Dorsolateral prefrontal cortex (tissue), 120 donors: ENCODE measurements at regions of chr18 and their contacts with region 1.

Region 1: DNA sequence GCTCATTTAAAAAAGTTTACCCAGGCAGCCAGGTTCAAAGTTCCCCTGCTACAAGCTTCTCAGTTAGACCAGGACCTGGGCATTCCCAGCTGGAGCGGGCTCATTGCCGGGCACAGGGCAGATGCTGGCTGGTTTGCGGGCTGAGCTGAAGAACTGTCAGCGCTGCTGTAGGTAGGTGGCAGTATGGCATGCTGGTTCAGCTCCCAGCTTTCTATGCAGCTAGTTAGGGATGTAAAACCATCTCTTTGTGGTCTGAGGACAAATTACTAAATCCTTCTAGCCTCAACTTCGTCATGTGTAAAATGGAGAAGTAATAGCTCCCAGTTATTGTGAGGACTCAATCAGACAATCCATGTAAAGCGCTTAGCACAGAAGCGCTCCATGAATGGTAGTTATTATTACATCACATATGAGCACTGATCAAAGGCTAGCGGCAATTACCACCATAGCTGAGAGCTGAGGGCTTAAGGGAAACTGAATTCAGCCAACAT is 2.4 kb upstream of the LDLRAD4 start:
- DNase-seq: peak; percentile 70 to 91 (median 88)
- H3K4me3 ChIP-seq: peak overlapping the region in 53 of 59 donors; percentile 17 to 95 (median 82)
- H3K27ac ChIP-seq: peak overlapping the region in 43 of 59 donors; percentile 23 to 85 (median 62)
- H3K27me3 ChIP-seq: no peaks in the 10 kb centered on the region
- CTCF ChIP-seq: peak; percentile 58 to 96 (median 87)

Region 2: DNA sequence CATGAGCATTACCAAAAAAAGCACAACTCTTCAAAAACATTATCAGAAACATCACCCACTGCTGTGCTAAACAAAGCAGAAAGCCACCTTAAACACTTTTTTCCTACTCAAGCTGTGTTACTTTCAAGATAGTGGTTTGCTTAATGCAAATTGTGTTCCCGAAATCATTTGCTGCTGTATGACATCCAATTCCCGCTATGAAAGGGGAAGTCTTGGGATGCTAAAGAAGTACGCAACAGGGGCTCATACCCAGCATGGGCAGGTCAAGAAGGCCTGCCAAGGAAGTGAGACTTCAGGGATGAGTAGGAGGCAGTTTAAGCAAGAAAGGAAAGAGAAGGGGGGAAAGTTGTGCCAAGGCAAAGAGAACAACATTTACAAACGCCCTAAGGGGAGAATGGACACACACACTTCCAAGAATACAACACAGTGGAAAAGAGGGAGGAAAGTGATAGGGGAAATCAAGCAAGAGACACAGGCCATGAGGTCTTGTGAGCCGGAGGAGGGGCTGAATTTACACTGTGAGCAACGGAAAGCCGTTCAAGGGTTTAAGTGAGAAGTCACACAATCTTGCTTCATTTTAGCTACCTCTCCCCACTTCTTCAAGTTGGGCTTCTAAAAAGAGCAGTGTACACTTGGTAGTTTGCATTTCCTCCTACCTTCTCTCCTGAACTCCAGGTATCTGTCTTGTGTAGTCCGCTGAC is 336.1 kb before region 1 on chr18:
- intact Hi-C with region 1: no loop called
- DNase-seq: no peak
- H3K4me3 ChIP-seq: no peak overlapping the region
- H3K27ac ChIP-seq: peak overlapping the region in 28 of 59 donors; percentile 2 to 83 (median 30)
- H3K27me3 ChIP-seq: no peaks in the 10 kb centered on the region
- CTCF ChIP-seq: no peak

Region 3: GRCh38 chr18:13371689-13372418 is 155.7 kb after region 1 on chr18:
- intact Hi-C with region 1: no loop called
- DNase-seq: no peak
- H3K4me3 ChIP-seq: peak overlapping the region in 1 of 59 donors; percentile 21
- H3K27ac ChIP-seq: peak overlapping the region in 35 of 59 donors; percentile 4 to 96 (median 73)
- H3K27me3 ChIP-seq: no peaks in the 10 kb centered on the region
- CTCF ChIP-seq: no peak

Region 4: DNA sequence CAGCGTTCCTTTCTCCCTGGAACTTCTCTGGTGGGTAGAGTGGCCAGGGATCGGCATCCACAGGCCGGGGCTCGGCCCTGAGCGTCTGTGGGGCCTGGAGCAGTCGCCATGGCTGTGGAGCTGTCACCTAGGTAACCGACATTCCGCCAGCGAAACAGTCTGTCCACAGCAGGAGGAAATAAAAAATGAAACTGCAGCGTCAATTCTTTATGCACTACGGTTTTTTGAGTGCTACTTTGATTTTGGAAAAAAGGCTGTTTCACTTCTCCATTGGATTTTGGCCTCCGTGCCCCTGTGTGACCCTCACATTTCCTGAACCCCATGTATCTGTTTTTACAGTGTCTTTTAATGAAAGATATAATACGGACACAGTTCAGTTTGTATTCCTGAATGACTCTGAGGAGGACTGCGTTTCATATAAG is 165.8 kb after region 1 on chr18:
- intact Hi-C with region 1: loop called in 1 of 2 experiments (anchors 5 kb)
- DNase-seq: peak in 3 of 10 donors; percentile 52 to 74 (median 68)
- H3K4me3 ChIP-seq: peak overlapping the region in 54 of 59 donors; percentile 3 to 54 (median 34)
- H3K27ac ChIP-seq: peak overlapping the region in 56 of 59 donors; percentile 6 to 88 (median 74)
- H3K27me3 ChIP-seq: no peaks in the 10 kb centered on the region
- CTCF ChIP-seq: no peak

Region 5: GRCh38 chr18:13500227-13500865 is 284.2 kb after region 1 on chr18:
- intact Hi-C with region 1: no loop called
- DNase-seq: peak in 3 of 10 donors; percentile 32 to 69 (median 32)
- H3K4me3 ChIP-seq: peak overlapping the region in 44 of 59 donors; percentile 1 to 65 (median 33)
- H3K27ac ChIP-seq: peak overlapping the region in 32 of 59 donors; percentile 5 to 76 (median 46)
- H3K27me3 ChIP-seq: no peaks in the 10 kb centered on the region
- CTCF ChIP-seq: peak in 2 of 56 donors; percentile 10 to 26

Region 6: GRCh38 chr18:13530879-13531387 is 314.8 kb after region 1 on chr18:
- intact Hi-C with region 1: loop called (anchors 2 kb)
- DNase-seq: peak; percentile 48 to 85 (median 72)
- H3K4me3 ChIP-seq: no peak overlapping the region
- H3K27ac ChIP-seq: peak overlapping the region in 6 of 59 donors; percentile 1 to 57 (median 16)
- H3K27me3 ChIP-seq: no peaks in the 10 kb centered on the region
- CTCF ChIP-seq: peak; percentile 17 to 80 (median 64)

Region 7: DNA sequence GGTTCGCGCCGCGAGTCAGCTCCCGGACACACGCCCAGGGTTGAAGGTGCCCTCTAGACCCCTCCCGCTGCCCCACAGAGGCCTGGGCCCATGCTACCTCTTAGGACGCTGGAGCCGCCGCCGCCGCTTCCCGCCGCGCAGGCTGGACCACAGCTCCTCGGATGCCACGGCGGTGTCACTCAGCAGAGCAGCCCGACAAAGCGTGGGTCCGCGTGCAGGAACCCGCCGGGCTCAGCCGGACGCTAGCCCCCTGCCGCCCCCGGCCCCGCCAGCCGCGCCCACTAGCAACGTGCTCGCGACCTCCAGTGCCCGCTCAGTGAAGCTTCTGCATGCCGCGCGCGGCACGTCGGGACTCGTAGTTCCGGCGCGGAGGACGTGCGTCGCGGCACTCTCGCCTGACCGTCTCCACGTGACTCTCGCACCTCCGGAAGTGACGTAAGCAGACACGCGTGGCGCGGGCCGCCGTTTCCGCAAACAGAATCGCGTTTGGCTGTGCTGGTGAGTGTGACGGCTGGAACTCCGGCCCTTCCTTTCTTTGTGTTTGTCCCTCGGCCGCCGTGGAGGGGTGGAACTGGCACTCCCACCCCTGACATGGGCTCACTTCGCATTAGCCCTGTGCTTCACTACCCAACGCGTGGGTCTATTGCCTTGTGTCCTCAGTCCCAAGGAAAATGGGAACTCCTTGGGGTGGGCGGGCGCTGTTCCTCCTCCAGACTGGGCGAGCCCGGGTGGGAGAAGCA is 510.3 kb after region 1 on chr18 and contains the starts of genes FAM210A and RNMT:
- intact Hi-C with region 1: loop called (anchors 2 to 5 kb)
- DNase-seq: peak; percentile 95 to 98 (median 97)
- H3K4me3 ChIP-seq: peak within 1 kb of the TSS; percentile 71 to 100 (median 96)
- H3K27ac ChIP-seq: peak within 1 kb of the TSS; percentile 30 to 96 (median 88)
- H3K27me3 ChIP-seq: no peaks in the 10 kb centered on the region
- CTCF ChIP-seq: peak in 55 of 56 donors; percentile 10 to 76 (median 52)
- total RNA-seq, gene FAM210A: 10.7 to 22.2 (median 16.6) TPM
- total RNA-seq, gene RNMT: 25.2 to 79.9 (median 53.7) TPM